GM12878 (cell line): ENCODE measurements at regions of chr4 and their contacts with region 1.

Region 1: DNA sequence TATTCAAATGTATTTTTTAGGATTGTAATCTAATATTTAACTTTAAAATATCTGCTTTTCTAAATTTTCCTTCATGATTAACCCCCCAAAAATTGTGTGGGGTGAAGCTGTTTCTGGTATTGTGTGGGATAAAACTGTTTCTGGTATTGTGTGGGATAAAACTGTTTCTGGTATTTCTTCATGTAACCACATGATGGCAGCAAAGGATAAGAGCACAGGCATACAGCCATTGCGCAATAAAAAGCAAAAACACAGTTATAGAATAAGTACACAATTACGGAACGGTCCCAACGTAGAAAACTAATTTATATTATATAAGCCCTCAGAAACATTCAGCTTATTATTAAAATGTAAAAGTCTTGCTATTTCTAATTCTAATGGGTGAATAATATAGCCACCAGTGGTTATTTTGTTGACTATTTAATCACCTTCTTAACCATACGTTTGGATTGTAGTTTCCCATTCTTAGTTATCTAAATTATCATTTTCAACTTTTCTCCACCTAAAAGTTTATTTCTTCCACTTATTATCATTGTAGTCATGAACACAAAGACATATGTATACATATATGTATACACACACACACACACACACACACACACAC is 333.9 kb upstream of the FSTL5 start:
- DNase-seq: no peak
- ATAC-seq: peak; percentile 85
- H3K4me3 ChIP-seq: no peak overlapping the region
- H3K27ac ChIP-seq: no peak overlapping the region
- H3K4me1 ChIP-seq: no peaks in the 10 kb centered on the region
- H3K27me3 ChIP-seq: no peaks in the 10 kb centered on the region
- CTCF ChIP-seq: peak; percentile 60 to 73 (median 68)
- EP300 ChIP-seq: no peak
- POLR2A ChIP-seq: no peak
- RAD21 ChIP-seq: peak; percentile 97

Region 2: GRCh38 chr4:160765168-160765567 is 1732.5 kb before region 1 on chr4:
- CTCF ChIA-PET with region 1: no interaction called
- POLR2A ChIA-PET with region 1: no interaction called
- RAD21 ChIA-PET with region 1: no interaction called
- SMC1A ChIA-PET with region 1: no interaction called
- in situ Hi-C with region 1: no loop called
- intact Hi-C with region 1: no loop called
- DNase-seq: no peak
- ATAC-seq: no peak
- H3K4me3 ChIP-seq: no peak overlapping the region
- H3K27ac ChIP-seq: no peak overlapping the region
- H3K4me1 ChIP-seq: no peaks in the 10 kb centered on the region
- H3K27me3 ChIP-seq: no peaks in the 10 kb centered on the region
- CTCF ChIP-seq: no peak
- EP300 ChIP-seq: no peak
- POLR2A ChIP-seq: no peak
- RAD21 ChIP-seq: no peak

Region 3: GRCh38 chr4:162163852-162164759 is 333.6 kb before region 1 on chr4 and contains the start of gene FSTL5:
- CTCF ChIA-PET with region 1: no interaction called
- POLR2A ChIA-PET with region 1: no interaction called
- RAD21 ChIA-PET with region 1: no interaction called
- SMC1A ChIA-PET with region 1: no interaction called
- in situ Hi-C with region 1: no loop called
- intact Hi-C with region 1: no loop called
- DNase-seq: no peak
- ATAC-seq: peak; percentile 80
- H3K4me3 ChIP-seq: peak within 1 kb of the TSS; percentile 16; the same call in 1 of the 2 replicates
- H3K27ac ChIP-seq: no peak within 1 kb of the TSS
- H3K4me1 ChIP-seq: no peaks in the 10 kb centered on the region; the same call in 1 of the 2 replicates
- H3K27me3 ChIP-seq: no peaks in the 10 kb centered on the region
- CTCF ChIP-seq: no peak
- EP300 ChIP-seq: no peak
- POLR2A ChIP-seq: no peak
- RAD21 ChIP-seq: no peak
- polyA plus RNA-seq, gene FSTL5: 0.04 TPM in 1 of 2 experiments, not detected in the other

Region 4: GRCh38 chr4:162469977-162470376 is 27.7 kb before region 1 on chr4:
- CTCF ChIA-PET with region 1: no interaction called
- POLR2A ChIA-PET with region 1: no interaction called
- RAD21 ChIA-PET with region 1: no interaction called
- SMC1A ChIA-PET with region 1: no interaction called
- in situ Hi-C with region 1: no loop called
- intact Hi-C with region 1: no loop called
- DNase-seq: no peak
- ATAC-seq: no peak
- H3K4me3 ChIP-seq: no peak overlapping the region
- H3K27ac ChIP-seq: no peak overlapping the region
- H3K4me1 ChIP-seq: no peaks in the 10 kb centered on the region
- H3K27me3 ChIP-seq: no peaks in the 10 kb centered on the region
- CTCF ChIP-seq: no peak
- EP300 ChIP-seq: no peak
- POLR2A ChIP-seq: no peak
- RAD21 ChIP-seq: no peak

Region 5: GRCh38 chr4:162512716-162513115 is 15.1 kb after region 1 on chr4:
- CTCF ChIA-PET with region 1: interaction called, 13 read pairs
- POLR2A ChIA-PET with region 1: no interaction called
- RAD21 ChIA-PET with region 1: interaction called, 3 read pairs
- SMC1A ChIA-PET with region 1: interaction called, 8 read pairs
- in situ Hi-C with region 1: no loop called
- intact Hi-C with region 1: no loop called
- DNase-seq: no peak
- ATAC-seq: no peak
- H3K4me3 ChIP-seq: no peak overlapping the region
- H3K27ac ChIP-seq: no peak overlapping the region
- H3K4me1 ChIP-seq: no peaks in the 10 kb centered on the region
- H3K27me3 ChIP-seq: no peaks in the 10 kb centered on the region
- CTCF ChIP-seq: no peak
- EP300 ChIP-seq: no peak
- POLR2A ChIP-seq: no peak
- RAD21 ChIP-seq: no peak

Region 6: GRCh38 chr4:162586266-162586665 is 88.6 kb after region 1 on chr4:
- CTCF ChIA-PET with region 1: no interaction called
- POLR2A ChIA-PET with region 1: no interaction called
- RAD21 ChIA-PET with region 1: no interaction called
- SMC1A ChIA-PET with region 1: no interaction called
- in situ Hi-C with region 1: no loop called
- intact Hi-C with region 1: no loop called
- DNase-seq: no peak
- ATAC-seq: no peak
- H3K4me3 ChIP-seq: no peak overlapping the region
- H3K27ac ChIP-seq: no peak overlapping the region
- H3K4me1 ChIP-seq: no peaks in the 10 kb centered on the region
- H3K27me3 ChIP-seq: no peaks in the 10 kb centered on the region
- CTCF ChIP-seq: no peak
- EP300 ChIP-seq: no peak
- POLR2A ChIP-seq: no peak
- RAD21 ChIP-seq: no peak

Region 7: DNA sequence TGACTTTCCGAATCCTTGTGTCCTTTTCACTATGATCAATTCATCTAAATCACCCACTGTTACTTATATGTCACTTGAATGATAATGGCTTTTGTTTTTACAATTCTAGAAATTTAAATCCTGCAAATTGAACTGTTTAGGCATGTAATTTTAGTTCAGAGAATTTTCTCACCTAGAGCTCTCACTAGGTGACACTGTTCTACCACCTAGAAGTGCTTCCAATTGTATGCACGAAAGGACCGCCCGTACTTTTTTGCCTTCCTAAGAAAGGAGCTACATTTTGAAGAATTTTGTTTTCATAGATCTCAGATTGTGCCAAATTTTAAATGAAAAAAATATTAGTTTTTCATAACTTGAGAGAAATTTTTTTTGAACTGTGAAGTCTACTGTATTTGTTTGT is 147.7 kb after region 1 on chr4:
- CTCF ChIA-PET with region 1: interaction called, 15 read pairs
- POLR2A ChIA-PET with region 1: no interaction called
- RAD21 ChIA-PET with region 1: interaction called, 7 read pairs
- SMC1A ChIA-PET with region 1: interaction called, 3 read pairs
- in situ Hi-C with region 1: no loop called
- intact Hi-C with region 1: no loop called
- DNase-seq: no peak
- ATAC-seq: no peak; the same call in 2 of the 3 replicates
- H3K4me3 ChIP-seq: no peak overlapping the region
- H3K27ac ChIP-seq: no peak overlapping the region
- H3K4me1 ChIP-seq: no peaks in the 10 kb centered on the region
- H3K27me3 ChIP-seq: no peaks in the 10 kb centered on the region
- CTCF ChIP-seq: peak in 1 of 3 experiments; percentile 44; a peak in 3 of 6 replicates
- EP300 ChIP-seq: no peak
- POLR2A ChIP-seq: no peak
- RAD21 ChIP-seq: peak; percentile 42

Region 8: GRCh38 chr4:162959046-162959445 is 461.4 kb after region 1 on chr4:
- CTCF ChIA-PET with region 1: interaction called, 3 read pairs
- POLR2A ChIA-PET with region 1: no interaction called
- RAD21 ChIA-PET with region 1: no interaction called
- SMC1A ChIA-PET with region 1: no interaction called
- in situ Hi-C with region 1: no loop called
- intact Hi-C with region 1: loop called (anchors 5 kb)
- DNase-seq: peak; percentile 1
- ATAC-seq: peak; percentile 74
- H3K4me3 ChIP-seq: no peak overlapping the region
- H3K27ac ChIP-seq: no peak overlapping the region
- H3K4me1 ChIP-seq: no peaks in the 10 kb centered on the region
- H3K27me3 ChIP-seq: peaks cover 0 to 3% of the 10 kb centered on the region in 2 experiments; a peak in 3 of 4 replicates
- CTCF ChIP-seq: peak in 2 of 3 experiments; percentile 23 to 24; a peak in 2 of 6 replicates
- EP300 ChIP-seq: no peak
- POLR2A ChIP-seq: no peak
- RAD21 ChIP-seq: peak; percentile 28; the same call in 1 of the 2 replicates

Region 9: GRCh38 chr4:163042306-163042705 is 544.6 kb after region 1 on chr4:
- CTCF ChIA-PET with region 1: interaction called, 23 read pairs
- POLR2A ChIA-PET with region 1: no interaction called
- RAD21 ChIA-PET with region 1: interaction called, 6 read pairs
- SMC1A ChIA-PET with region 1: interaction called, 13 read pairs
- in situ Hi-C with region 1: loop called (anchors 10 kb)
- intact Hi-C with region 1: loop called (anchors 1 kb)
- DNase-seq: no peak
- ATAC-seq: no peak
- H3K4me3 ChIP-seq: no peak overlapping the region
- H3K27ac ChIP-seq: no peak overlapping the region
- H3K4me1 ChIP-seq: no peaks in the 10 kb centered on the region
- H3K27me3 ChIP-seq: no peaks in the 10 kb centered on the region; a peak in 1 of 4 replicates
- CTCF ChIP-seq: no peak
- EP300 ChIP-seq: no peak
- POLR2A ChIP-seq: no peak
- RAD21 ChIP-seq: no peak

Region 10: DNA sequence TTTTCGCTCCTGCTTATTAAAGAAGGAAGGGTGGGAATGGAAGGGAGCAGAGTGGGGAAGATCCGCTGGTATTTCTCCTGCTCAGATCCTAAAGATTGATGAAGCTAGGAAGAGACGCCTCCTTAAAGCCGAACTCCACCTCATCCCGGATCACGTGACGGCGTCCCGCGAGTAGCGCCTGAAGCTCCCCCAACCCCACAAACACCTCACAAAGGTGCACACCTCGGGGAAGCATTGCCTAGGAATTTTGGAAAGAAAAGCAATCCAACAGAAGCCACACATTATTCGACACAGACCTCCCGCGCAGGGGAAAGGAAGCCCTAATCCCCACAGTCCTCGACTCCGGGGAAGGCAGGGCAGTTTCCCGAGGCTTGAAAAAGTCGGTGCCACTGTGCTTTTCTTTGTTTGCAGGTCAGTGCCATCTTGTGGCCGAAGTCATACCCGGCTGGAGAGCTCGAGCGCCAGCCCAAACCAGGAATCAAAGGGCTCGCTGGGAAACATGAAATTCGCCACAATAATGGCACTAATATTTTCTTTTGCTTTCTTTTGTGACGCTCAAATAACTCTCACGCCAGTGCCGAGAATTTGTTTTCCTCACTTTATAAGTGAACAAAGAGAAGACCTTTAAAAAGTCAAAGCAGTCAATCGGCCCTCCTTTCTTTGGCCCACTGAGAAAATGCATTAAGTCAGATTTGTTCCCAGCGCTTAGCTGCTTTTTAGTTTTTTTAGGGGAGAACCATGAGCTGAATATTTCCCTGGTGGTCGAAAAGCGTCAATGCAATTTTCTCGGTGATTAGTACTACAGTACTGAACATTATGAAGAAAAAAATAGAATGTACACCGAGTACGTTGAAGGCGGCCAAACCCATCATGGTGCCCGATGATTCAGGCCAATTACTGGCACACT is 835.1 kb after region 1 on chr4 and contains the start of gene NPY1R:
- CTCF ChIA-PET with region 1: interaction called, 3 read pairs
- POLR2A ChIA-PET with region 1: no interaction called
- RAD21 ChIA-PET with region 1: no interaction called
- SMC1A ChIA-PET with region 1: interaction called, 3 read pairs
- in situ Hi-C with region 1: loop called (anchors 10 kb)
- intact Hi-C with region 1: loop called (anchors 1 kb)
- DNase-seq: peak; percentile 1
- ATAC-seq: peak; percentile 90
- H3K4me3 ChIP-seq: peak within 1 kb of the TSS; percentile 59
- H3K27ac ChIP-seq: no peak within 1 kb of the TSS
- H3K4me1 ChIP-seq: no peaks in the 10 kb centered on the region
- H3K27me3 ChIP-seq: peaks cover 5 to 11% of the 10 kb centered on the region in 2 experiments
- CTCF ChIP-seq: peak; percentile 55 to 61 (median 57)
- EP300 ChIP-seq: no peak
- POLR2A ChIP-seq: no peak
- RAD21 ChIP-seq: peak; percentile 70
- polyA plus RNA-seq, gene NPY1R: not detected

Region 11: GRCh38 chr4:163484906-163485305 is 987.2 kb after region 1 on chr4:
- CTCF ChIA-PET with region 1: no interaction called
- POLR2A ChIA-PET with region 1: no interaction called
- RAD21 ChIA-PET with region 1: no interaction called
- SMC1A ChIA-PET with region 1: no interaction called
- in situ Hi-C with region 1: no loop called
- intact Hi-C with region 1: loop called (anchors 2 kb)
- DNase-seq: no peak
- ATAC-seq: peak; percentile 87
- H3K4me3 ChIP-seq: no peak overlapping the region
- H3K27ac ChIP-seq: no peak overlapping the region
- H3K4me1 ChIP-seq: peaks cover 12% of the 10 kb centered on the region; the same call in 1 of the 2 replicates
- H3K27me3 ChIP-seq: no peaks in the 10 kb centered on the region
- CTCF ChIP-seq: peak; percentile 55 to 73 (median 59); a peak in 5 of 6 replicates
- EP300 ChIP-seq: no peak
- POLR2A ChIP-seq: no peak
- RAD21 ChIP-seq: peak; percentile 91